Pancreas (tissue), 10 donors: ENCODE measurements at regions of chr18 and their contacts with region 1.

Region 1: DNA sequence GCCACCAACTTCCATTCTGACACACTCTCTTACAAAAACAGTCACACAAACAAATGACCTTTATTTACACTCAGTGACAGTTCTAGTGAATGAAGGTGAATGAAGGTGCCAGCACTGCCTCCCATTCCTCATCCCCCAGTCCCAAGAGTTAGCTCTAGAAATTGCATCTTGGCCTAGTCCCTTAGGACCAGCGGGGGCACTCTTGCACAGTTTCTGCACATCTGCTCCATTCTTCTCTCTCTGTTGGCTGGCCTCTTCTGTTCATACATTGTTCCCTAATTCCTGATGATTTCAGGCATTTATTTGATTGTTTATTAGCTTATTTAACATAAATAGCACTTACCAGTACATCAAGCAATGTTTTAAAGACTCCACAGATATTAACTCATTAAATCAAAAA is 30.9 kb downstream of the GAREM1 start:
- DNase-seq: no peak
- ATAC-seq: no peak
- H3K4me3 ChIP-seq: no peak overlapping the region
- H3K27ac ChIP-seq: no peak overlapping the region
- H3K4me1 ChIP-seq: peaks cover 10 to 31% (median 20%) of the 10 kb centered on the region in 3 donors
- H3K27me3 ChIP-seq: no peaks in the 10 kb centered on the region
- CTCF ChIP-seq: no peak

Region 2: GRCh38 chr18:32383050-32383819 is 56.6 kb before region 1 on chr18:
- intact Hi-C with region 1: loop called in 1 of 3 experiments (anchors 10 kb)
- DNase-seq: peak in 2 of 6 donors; percentile 33 to 56
- ATAC-seq: peak; percentile 61 to 79 (median 73)
- H3K4me3 ChIP-seq: no peak overlapping the region
- H3K27ac ChIP-seq: peak overlapping the region; percentile 47 to 84 (median 70)
- H3K4me1 ChIP-seq: peaks cover 25 to 26% (median 26%) of the 10 kb centered on the region in 3 donors
- H3K27me3 ChIP-seq: no peaks in the 10 kb centered on the region
- CTCF ChIP-seq: no peak